ENCODE measurements at regions of chr1 and their contacts with region 1.

Region 1: DNA sequence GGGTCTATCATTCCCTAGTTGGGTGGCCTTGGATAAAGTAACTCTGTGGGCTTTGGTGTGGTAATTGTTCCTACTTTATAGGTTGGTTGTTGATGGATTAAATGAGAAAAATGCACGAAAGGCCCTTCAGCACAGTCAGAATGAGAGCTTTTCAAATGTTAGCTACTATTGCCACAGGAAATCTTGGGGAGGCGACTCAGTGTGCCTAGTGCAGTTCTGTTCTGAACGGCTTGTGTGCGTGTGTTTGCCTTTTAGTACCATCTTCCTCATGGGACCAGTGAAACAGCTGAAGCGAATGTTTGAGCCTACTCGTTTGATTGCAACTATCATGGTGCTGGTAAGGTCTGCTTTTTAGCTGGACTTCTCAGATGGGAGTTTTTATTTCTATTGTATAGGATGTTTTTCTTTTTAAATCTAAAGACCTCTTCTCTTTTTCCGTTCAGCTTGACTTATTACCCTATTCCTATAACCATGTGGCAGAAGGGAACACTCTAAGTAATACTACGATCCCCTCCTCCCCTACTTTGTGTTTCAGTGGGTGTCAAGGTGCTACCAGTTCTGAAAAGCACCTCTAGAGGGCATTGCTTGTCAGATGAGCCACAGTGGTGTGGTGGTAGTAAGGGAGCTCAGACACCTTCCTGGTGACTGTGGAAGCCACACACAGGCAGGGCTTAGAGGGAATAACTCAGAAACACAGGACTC is 9.2 kb downstream of the SFT2D2 start:
- DNase-seq: peak; percentile 52
- CTCF ChIP-seq: peak; percentile 59

Region 2: GRCh38 chr1:168216171-168216570 is 18.8 kb before region 1 on chr1:
- CTCF ChIA-PET with region 1: interaction called, 27 read pairs
- POLR2A ChIA-PET with region 1: no interaction called
- DNase-seq: no peak
- CTCF ChIP-seq: no peak

Region 3: GRCh38 chr1:168321945-168322344 is 86.9 kb after region 1 on chr1:
- CTCF ChIA-PET with region 1: interaction called, 10 read pairs
- POLR2A ChIA-PET with region 1: no interaction called
- DNase-seq: no peak
- CTCF ChIP-seq: peak; percentile 50

Region 4: DNA sequence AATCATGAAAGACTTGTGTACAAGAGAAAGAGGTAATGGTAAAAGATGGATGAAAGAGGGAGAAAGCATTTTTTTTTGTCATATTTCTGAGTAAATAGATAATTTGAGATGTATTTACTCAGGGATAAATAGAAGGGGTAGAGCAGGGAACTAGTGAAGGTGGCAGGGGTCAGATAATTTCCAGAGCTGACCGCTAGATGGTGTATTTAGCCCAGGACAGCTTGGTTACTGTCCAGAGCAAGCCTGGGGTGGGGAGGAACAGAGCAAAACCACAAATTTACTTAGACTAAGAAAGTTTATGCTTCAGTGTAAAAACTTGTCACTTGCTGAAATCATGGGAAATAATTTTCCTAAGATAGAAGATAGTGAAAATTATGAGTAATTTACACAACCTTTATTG is 217.3 kb after region 1 on chr1:
- CTCF ChIA-PET with region 1: no interaction called
- POLR2A ChIA-PET with region 1: no interaction called
- DNase-seq: no peak
- CTCF ChIP-seq: peak; percentile 19